ENCODE measurements at regions of chr17 and their contacts with region 1.

Region 1: DNA sequence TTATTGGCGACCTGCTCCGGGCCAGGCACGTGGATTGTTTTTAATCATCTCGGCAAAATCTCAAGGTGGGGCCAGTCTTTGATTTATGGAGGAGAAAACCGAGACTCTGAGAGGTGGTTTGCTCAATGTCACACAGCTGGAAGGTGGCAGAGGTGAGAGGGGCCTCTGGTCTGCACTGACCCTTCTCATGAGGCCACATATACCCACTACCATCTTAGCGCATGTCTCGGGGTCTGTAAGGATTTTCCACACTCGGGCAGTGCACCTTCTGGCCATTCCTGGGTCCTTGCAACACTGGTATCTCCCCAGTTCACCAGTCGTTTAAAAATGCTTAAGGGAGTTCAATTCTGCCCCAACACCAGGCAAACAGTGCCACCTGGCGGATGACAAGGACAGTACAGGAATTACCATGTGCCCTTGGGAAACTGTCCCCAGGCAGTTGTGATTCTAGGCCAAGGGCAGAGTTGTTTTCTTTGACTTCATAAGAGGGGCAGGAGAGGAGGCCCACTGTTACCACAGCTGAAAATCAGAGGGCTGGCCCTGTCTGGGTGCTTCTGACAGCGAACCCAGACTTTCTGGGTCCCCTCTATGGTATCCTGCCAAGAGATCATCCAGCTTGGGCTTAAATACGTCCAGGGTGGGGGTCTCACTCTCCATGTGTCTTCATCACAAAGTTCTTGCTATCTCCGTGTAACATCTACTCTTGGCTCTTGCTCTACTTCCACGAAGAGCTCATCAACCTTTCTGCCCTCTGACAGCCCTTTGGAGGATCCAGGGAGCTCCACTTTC is 39.4 kb upstream of the RAI1 start:
- DNase-seq: peak; percentile 85
- ATAC-seq: peak; percentile 97
- H3K4me3 Mint-ChIP-seq: no peak overlapping the region
- H3K27ac Mint-ChIP-seq: no peak overlapping the region
- H3K4me1 Mint-ChIP-seq: no peaks in the 10 kb centered on the region
- H3K27me3 Mint-ChIP-seq: no peaks in the 10 kb centered on the region
- CTCF ChIP-seq: peak; percentile 82

Region 2: DNA sequence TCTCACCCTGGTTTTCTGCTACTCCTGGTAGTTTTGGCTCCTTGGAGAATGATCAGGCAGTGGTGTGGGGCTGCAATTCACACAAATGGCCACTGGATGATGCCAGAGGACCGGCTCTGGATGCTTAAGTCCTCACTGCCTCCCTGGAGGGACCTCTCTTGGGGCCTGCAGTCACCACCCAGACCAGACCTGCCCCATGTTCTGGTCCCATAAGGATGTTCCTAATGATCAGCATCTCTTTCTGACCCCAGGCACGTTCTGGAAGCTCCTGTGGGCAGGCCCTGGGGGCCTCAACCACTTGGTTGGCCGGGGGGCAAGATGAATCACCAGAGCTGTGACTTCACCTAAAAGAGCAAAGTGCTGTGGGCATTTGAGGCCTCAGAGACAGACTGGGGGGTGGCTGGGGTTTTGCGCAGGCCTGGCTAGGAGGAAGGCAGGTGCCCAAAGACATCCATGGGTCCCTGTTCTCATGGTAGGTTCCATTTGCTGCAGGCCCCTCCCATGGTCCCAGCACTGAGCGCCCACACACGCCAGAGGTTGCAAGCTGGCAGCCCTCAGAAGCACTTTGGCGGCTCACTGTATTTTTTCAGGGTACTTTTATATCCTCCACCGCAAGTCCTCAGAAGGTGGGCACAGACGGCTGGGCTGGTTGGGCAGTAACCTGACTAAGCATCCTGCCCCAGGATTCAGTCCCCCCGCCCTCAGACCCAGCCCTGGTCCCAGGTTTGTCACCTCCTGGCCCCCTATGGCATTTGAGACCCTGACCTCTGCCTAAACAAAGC is 285.5 kb before region 1 on chr17:
- CTCF ChIA-PET with region 1: interaction called, 65 read pairs
- POLR2A ChIA-PET with region 1: interaction called, 3 read pairs
- intact Hi-C with region 1: loop called (anchors 2 kb)
- DNase-seq: peak; percentile 85
- ATAC-seq: peak; percentile 92
- H3K4me3 Mint-ChIP-seq: no peak overlapping the region
- H3K27ac Mint-ChIP-seq: no peak overlapping the region
- H3K4me1 Mint-ChIP-seq: no peaks in the 10 kb centered on the region
- H3K27me3 Mint-ChIP-seq: no peaks in the 10 kb centered on the region
- CTCF ChIP-seq: peak; percentile 99

Region 3: GRCh38 chr17:17568749-17569195 is 73.0 kb before region 1 on chr17:
- CTCF ChIA-PET with region 1: interaction called, 10 read pairs
- POLR2A ChIA-PET with region 1: no interaction called
- intact Hi-C with region 1: no loop called
- DNase-seq: peak; percentile 77
- ATAC-seq: peak; percentile 65
- H3K4me3 Mint-ChIP-seq: no peak overlapping the region
- H3K27ac Mint-ChIP-seq: no peak overlapping the region
- H3K4me1 Mint-ChIP-seq: no peaks in the 10 kb centered on the region
- H3K27me3 Mint-ChIP-seq: no peaks in the 10 kb centered on the region
- CTCF ChIP-seq: peak; percentile 76

Region 4: DNA sequence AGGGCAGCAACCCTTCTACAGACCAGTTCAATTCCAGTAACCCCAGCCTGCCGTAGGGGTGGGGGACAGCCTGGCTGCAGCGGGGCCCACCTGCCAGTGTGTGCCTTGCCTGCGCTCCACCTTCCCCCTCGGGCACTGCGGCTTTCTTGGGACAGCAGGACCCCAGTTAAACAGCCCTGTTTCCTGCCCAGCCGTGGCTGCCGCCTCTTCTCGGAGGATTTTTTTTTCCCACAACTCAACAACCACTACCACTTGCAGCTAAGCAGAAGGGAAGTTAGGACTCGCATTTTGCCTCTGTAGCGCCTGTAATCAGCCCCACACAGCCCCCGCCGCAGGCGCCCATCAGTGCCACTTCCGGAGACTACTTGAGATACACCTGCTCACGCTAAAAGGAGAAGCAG is 115.6 kb after region 1 on chr17:
- CTCF ChIA-PET with region 1: no interaction called
- POLR2A ChIA-PET with region 1: no interaction called
- intact Hi-C with region 1: no loop called
- DNase-seq: peak; percentile 74
- ATAC-seq: peak; percentile 68
- H3K4me3 Mint-ChIP-seq: peak overlapping the region; percentile 30
- H3K27ac Mint-ChIP-seq: peak overlapping the region; percentile 84
- H3K4me1 Mint-ChIP-seq: peaks cover 46% of the 10 kb centered on the region
- H3K27me3 Mint-ChIP-seq: no peaks in the 10 kb centered on the region
- CTCF ChIP-seq: no peak